MCF 10A (cell line): ENCODE measurements at regions of chr11 and their contacts with region 1.

Region 1: DNA sequence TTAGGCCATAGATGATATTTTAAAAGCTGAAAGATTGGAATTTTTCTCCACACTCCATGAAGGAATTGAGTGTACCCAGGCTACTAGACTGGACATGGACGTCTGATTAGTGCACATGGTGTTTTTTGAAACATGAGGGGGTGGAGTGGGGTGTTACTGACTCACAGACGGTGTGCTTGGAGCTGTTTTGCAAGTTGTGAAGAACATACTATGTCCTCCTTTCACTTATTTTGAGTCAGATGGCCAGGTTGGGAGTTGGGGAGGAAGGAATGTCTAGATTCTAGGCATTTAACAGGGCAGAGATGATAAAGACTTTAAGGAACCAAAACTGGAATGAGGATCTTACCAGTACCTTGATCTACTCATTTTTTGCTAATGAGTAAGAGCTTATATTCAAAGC is 158.1 kb upstream of the MTNR1B start:
- DNase-seq: peak; percentile 25
- H3K4me3 Mint-ChIP-seq: no peak overlapping the region
- H3K27ac Mint-ChIP-seq: peak overlapping the region; percentile 8
- H3K4me1 Mint-ChIP-seq: peaks cover 6% of the 10 kb centered on the region
- H3K27me3 Mint-ChIP-seq: no peaks in the 10 kb centered on the region
- CTCF ChIP-seq: no peak

Region 2: GRCh38 chr11:92443199-92443598 is 368.1 kb before region 1 on chr11:
- CTCF ChIA-PET with region 1: no interaction called
- POLR2A ChIA-PET with region 1: no interaction called
- intact Hi-C with region 1: no loop called
- DNase-seq: no peak
- H3K4me3 Mint-ChIP-seq: no peak overlapping the region
- H3K27ac Mint-ChIP-seq: no peak overlapping the region
- H3K4me1 Mint-ChIP-seq: peaks cover 9% of the 10 kb centered on the region
- H3K27me3 Mint-ChIP-seq: no peaks in the 10 kb centered on the region
- CTCF ChIP-seq: no peak

Region 3: GRCh38 chr11:92735039-92735438 is 76.3 kb before region 1 on chr11:
- CTCF ChIA-PET with region 1: no interaction called
- POLR2A ChIA-PET with region 1: no interaction called
- intact Hi-C with region 1: loop called (anchors 10 kb)
- DNase-seq: peak; percentile 30
- H3K4me3 Mint-ChIP-seq: no peak overlapping the region
- H3K27ac Mint-ChIP-seq: no peak overlapping the region
- H3K4me1 Mint-ChIP-seq: peaks cover 12% of the 10 kb centered on the region
- H3K27me3 Mint-ChIP-seq: peaks cover 19% of the 10 kb centered on the region
- CTCF ChIP-seq: peak; percentile 46